ENCODE measurements at regions of chr1 and their contacts with region 1.

Region 1: GRCh38 chr1:40363721-40364120 is 9.8 kb upstream of the SMAP2 start:
- DNase-seq: no peak
- ATAC-seq: no peak
- H3K4me3 Mint-ChIP-seq: no peak overlapping the region
- H3K27ac Mint-ChIP-seq: no peak overlapping the region
- H3K4me1 Mint-ChIP-seq: peaks cover 5% of the 10 kb centered on the region
- H3K27me3 Mint-ChIP-seq: no peaks in the 10 kb centered on the region

Region 2: GRCh38 chr1:40344597-40344996 is 19.1 kb before region 1 on chr1:
- CTCF ChIA-PET with region 1: interaction called, 26 read pairs
- POLR2A ChIA-PET with region 1: no interaction called
- DNase-seq: no peak
- ATAC-seq: peak; percentile 55
- H3K4me3 Mint-ChIP-seq: peak overlapping the region; percentile 30
- H3K27ac Mint-ChIP-seq: no peak overlapping the region
- H3K4me1 Mint-ChIP-seq: peaks cover 47% of the 10 kb centered on the region
- H3K27me3 Mint-ChIP-seq: no peaks in the 10 kb centered on the region

Region 3: DNA sequence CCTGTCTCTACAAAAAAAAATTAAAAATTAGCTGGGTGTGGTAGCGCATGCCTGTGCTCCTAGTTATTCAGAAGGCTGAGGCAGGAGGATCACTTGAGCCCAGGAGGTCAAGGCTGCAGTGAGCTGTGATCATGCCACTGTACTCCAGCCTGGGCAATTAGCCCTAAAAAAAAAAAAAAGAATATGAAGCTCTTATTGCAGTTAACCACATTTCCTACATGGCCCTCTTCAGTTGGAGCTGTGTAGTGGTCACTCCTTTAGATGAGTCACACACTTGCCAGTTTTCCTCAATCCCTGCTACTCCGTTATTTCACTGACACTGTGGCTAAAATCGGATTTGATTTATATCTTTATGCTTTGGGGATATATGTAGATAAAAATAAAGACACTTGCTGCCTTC is 339.6 kb after region 1 on chr1:
- CTCF ChIA-PET with region 1: no interaction called
- POLR2A ChIA-PET with region 1: no interaction called
- DNase-seq: no peak
- ATAC-seq: no peak
- H3K4me3 Mint-ChIP-seq: no peak overlapping the region
- H3K27ac Mint-ChIP-seq: no peak overlapping the region
- H3K4me1 Mint-ChIP-seq: peaks cover 49% of the 10 kb centered on the region
- H3K27me3 Mint-ChIP-seq: no peaks in the 10 kb centered on the region